Sciatic nerve (tissue), 2 donors: ENCODE measurements at regions of chr11 and their contacts with region 1.

Region 1: DNA sequence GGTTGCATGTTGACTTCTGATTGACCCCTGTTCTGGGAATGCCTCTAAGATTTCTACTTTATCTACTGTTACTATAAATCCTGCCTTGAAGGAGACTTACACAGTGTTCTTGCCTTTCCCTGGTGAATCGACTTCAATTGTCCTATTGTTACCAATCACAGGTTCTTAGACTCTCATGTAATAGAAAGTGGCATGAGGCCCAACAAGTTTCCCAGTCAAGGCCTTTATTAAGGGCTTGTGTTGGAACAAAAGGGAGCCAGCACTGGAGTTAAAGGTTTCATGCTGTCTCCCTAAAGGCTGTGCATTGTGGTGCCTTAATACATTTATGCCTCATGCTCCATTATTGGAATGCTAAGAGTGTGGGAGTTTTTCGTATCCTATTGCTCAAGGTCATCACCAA is 23.3 kb downstream of the MS4A2 start:
- DNase-seq: no peak
- ATAC-seq: no peak

Region 2: DNA sequence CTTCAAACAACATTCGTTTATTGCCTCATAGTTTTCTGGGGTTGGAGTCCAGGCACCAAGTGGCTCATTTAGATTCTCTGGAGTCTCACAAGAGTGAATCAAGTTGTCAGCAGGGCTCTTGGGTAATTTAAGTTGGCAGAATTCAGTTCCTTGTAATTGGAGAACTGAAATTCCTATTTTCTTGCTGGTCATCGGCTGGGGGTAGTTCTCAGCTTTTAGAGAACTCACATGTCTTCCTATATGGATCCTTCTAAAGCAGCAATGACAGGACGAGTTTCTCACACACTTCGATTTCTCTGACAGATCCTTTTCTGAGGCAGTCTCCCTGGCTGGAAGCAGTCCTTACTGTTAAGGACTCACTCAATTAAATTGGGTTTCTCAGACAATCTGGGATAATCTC is 112.1 kb before region 1 on chr11:
- intact Hi-C with region 1: no loop called
- DNase-seq: no peak
- ATAC-seq: no peak

Region 3: DNA sequence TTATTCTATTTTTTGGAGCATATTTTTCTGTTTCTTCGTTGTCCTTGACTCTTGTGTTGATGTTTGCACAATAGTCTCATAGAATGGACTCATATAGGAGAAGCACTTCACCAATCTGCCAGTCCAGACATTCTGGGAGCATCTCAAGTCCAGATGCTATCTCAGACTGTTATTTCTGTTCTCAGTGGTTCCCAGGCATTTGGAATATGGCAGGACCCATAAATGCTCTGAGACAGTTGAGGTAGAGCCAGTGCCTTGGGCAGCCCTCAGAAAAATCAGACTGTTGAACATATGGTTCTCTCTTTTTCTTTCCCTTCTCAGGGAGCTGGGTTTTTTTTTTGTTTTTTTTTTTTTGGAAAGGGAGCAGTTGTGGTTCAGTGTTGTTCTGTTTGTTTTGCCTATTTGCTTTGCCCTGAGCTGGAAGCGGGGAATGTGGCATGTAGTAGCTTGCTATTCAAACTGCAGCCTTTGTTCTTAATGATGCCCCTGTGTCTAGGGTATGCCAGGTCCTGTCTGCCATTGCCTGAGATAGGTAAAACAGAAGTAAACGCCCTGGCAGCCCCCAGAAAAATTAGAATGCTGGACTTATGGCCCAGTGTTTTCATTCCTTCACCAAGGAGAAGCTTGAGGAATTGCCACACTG is 27.0 kb before region 1 on chr11:
- intact Hi-C with region 1: no loop called
- DNase-seq: no peak
- ATAC-seq: no peak

Region 4: DNA sequence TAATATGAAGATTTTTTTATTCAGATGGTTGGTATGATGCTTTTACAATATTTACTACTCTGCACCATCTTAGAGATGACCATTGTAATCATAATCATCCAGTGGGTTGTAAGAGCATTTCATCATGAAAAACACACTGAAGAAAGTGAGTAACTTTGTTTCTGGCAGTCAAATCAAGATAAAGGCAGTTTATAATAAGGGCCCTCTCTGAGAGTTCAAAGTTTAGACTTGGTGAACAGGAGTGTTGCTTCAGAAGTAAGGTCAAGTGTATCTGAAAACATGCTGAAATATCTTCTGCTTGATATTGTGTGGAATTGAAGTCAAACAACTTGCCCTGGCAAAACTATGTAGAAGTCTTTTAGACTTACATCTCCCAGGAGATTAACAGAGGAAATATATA is 568.1 kb after region 1 on chr11:
- intact Hi-C with region 1: loop called (anchors 5 kb)
- DNase-seq: no peak
- ATAC-seq: no peak